ENCODE measurements at regions of chr1 and their contacts with region 1.

Region 1: GRCh38 chr1:241611063-241611462 is 29.1 kb downstream of the CHML start:
- DNase-seq: no peak
- H3K4me3 ChIP-seq: no peak overlapping the region
- H3K27ac ChIP-seq: no peak overlapping the region
- H3K27me3 ChIP-seq: no peaks in the 10 kb centered on the region
- CTCF ChIP-seq: peak; percentile 60

Region 2: GRCh38 chr1:241627453-241628259 is 16.6 kb after region 1 on chr1:
- CTCF ChIA-PET with region 1: interaction called, 103 read pairs
- POLR2A ChIA-PET with region 1: no interaction called
- DNase-seq: peak; percentile 46
- H3K4me3 ChIP-seq: no peak overlapping the region
- H3K27ac ChIP-seq: no peak overlapping the region
- H3K27me3 ChIP-seq: no peaks in the 10 kb centered on the region
- CTCF ChIP-seq: peak; percentile 79

Region 3: GRCh38 chr1:241817261-241817792 is 206.3 kb after region 1 on chr1:
- CTCF ChIA-PET with region 1: interaction called, 11 read pairs
- POLR2A ChIA-PET with region 1: no interaction called
- DNase-seq: peak; percentile 69
- H3K4me3 ChIP-seq: no peak overlapping the region
- H3K27ac ChIP-seq: peak overlapping the region; percentile 63
- H3K27me3 ChIP-seq: no peaks in the 10 kb centered on the region
- CTCF ChIP-seq: no peak

Region 4: GRCh38 chr1:241842565-241842964 is 231.5 kb after region 1 on chr1:
- CTCF ChIA-PET with region 1: interaction called, 42 read pairs
- POLR2A ChIA-PET with region 1: interaction called, 4 read pairs
- DNase-seq: peak; percentile 34
- H3K4me3 ChIP-seq: no peak overlapping the region
- H3K27ac ChIP-seq: peak overlapping the region; percentile 81
- H3K27me3 ChIP-seq: no peaks in the 10 kb centered on the region
- CTCF ChIP-seq: no peak

Region 5: DNA sequence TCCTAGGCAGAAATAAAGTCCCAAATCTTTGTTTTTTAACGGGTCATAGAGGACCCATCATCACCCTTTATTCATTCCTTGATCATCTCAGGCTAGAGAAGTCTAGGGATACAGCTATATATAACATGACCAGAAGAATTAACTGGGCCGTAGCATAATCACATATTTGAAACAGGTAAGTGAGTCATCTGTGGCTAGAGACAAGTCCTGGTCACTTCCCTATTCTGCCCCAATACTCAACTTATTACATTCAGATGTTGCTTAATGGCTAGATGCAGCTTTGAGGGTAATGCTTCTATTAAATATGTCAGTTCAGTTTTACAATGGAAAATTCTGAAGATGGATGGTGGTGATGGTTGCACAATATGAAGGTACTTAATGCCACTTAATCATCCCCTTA is 283.9 kb after region 1 on chr1:
- CTCF ChIA-PET with region 1: interaction called, 22 read pairs
- POLR2A ChIA-PET with region 1: no interaction called
- DNase-seq: no peak
- H3K4me3 ChIP-seq: no peak overlapping the region
- H3K27ac ChIP-seq: no peak overlapping the region
- H3K27me3 ChIP-seq: no peaks in the 10 kb centered on the region
- CTCF ChIP-seq: no peak

Measured in AG04450 (cell line).